ENCODE measurements at regions of chr12 and their contacts with region 1.

Region 1: DNA sequence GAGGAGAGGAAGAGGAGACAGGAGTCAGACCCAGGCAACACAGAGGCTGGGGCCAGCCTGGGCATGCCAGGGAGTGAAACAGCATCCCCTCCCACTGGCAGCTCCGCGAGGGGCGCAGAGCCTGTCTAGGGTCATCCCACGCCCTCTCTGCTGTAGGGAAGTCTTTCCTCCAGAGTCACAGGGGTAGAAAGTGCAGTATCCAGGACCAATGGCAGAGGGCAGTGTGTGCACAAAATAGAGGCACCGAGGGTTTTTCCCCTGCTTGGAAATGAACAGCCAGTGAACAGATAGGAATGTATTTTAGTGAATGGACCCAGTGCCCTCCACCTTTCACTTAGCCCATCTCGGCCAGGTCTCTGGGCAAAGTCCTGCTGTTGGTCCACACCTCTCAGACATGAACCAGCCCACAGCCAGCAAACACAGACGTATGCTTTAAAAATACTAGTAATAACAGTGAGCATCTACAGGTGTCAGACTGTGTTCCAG is 9.4 kb upstream of the KRT74 start:
- DNase-seq: peak; percentile 68
- H3K4me3 ChIP-seq: no peak overlapping the region
- H3K27ac ChIP-seq: no peak overlapping the region
- H3K4me1 ChIP-seq: no peaks in the 10 kb centered on the region
- H3K27me3 ChIP-seq: no peaks in the 10 kb centered on the region
- CTCF ChIP-seq: peak; percentile 33 to 66 (median 64)
- EP300 ChIP-seq: no peak
- POLR2A ChIP-seq: no peak

Region 2: DNA sequence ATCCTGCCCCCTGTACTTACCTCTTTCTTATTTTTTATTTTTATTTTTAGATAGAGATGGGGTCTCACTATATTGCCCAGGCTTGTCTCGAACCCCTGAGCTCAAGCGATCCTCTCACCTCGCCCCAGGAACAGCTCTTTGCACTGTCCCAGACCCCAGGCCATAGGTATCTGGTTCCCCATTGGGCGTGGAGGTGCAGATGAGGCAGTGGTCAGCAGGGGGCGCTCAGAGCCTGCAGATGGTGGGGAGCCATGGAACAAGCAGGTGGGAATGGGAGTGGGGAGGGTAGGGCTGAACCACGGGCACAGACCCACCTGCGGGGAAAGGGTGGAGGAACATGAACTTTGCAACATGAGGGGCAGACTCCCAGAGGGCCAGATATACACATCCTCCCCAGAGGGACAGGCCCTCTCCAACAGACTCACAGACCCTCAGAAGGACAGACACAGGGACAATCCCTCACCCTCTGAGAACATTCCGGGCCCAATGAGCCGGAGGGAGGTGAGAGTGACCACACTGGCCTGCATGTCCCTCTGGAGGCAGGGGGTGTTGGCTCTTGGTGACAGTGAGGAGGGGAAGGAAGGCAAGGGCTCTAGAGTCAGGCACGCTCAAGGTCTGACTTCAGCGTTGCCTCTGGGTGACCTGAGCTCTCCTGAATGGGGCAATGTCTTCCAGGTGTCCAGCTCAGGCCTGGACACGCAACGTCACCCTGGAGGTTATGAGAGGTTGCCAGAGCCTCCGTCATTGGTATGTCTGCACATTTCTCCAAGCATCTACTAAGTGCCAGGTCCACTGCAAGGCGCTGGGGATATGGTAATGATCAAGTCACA is 426.1 kb before region 1 on chr12:
- intact Hi-C with region 1: loop called (anchors 10 kb)
- DNase-seq: peak; percentile 84
- H3K4me3 ChIP-seq: no peak overlapping the region
- H3K27ac ChIP-seq: no peak overlapping the region
- H3K4me1 ChIP-seq: peaks cover 0 to 7% (median 7%) of the 10 kb centered on the region in 4 donors
- H3K27me3 ChIP-seq: no peaks in the 10 kb centered on the region
- CTCF ChIP-seq: peak; percentile 92 to 98 (median 94)
- EP300 ChIP-seq: no peak
- POLR2A ChIP-seq: no peak

Region 3: DNA sequence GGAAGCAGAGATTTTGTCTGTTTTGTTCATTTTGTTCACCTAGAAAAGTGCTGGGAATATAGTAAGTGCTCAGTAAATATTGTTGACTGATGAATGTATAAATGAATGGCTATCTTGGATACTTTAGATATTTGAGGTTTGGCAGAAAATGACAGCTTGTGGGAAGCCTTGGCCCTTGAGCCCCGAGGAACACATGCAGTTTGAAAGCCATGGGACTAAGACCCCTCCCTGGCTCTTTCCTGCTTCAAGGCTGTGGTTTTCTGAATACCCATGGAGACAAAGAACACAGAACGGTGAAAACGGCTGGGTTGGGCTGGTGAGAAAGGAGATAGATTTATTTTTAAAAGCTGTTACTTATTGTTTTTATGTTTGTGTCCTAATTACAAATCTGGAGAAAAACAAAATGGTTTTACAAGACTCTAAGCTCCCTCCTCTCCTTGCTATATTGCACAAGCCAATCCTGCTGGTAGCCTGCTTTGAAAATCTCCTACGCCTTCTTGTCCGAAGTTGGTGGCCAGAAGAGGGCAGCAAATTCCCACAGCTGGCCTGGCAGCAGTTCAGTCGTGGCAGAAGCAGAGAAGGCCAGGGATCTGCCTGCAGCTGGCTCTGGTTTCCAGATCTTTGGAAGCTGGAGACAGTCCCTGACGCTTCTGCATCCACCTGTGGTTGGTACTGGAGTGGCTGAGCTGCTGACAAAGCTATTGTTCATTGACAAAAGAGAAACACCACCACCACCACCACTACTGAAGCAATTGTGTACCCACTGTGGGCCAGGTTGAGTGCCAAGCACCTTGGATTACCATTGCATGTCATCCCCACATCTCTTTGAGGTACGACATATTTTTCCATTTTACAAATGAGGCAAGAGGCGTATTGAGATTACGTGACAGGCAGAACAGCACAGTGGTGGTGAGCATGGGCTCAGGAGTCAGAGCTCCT is 210.5 kb before region 1 on chr12:
- intact Hi-C with region 1: loop called (anchors 5 kb)
- DNase-seq: peak; percentile 89
- H3K4me3 ChIP-seq: no peak overlapping the region
- H3K27ac ChIP-seq: peak overlapping the region in 1 of 4 donors; percentile 34
- H3K4me1 ChIP-seq: peaks cover 0 to 15% (median 0%) of the 10 kb centered on the region in 4 donors
- H3K27me3 ChIP-seq: no peaks in the 10 kb centered on the region
- CTCF ChIP-seq: peak; percentile 65 to 80 (median 78)
- EP300 ChIP-seq: no peak
- POLR2A ChIP-seq: no peak

Region 4: DNA sequence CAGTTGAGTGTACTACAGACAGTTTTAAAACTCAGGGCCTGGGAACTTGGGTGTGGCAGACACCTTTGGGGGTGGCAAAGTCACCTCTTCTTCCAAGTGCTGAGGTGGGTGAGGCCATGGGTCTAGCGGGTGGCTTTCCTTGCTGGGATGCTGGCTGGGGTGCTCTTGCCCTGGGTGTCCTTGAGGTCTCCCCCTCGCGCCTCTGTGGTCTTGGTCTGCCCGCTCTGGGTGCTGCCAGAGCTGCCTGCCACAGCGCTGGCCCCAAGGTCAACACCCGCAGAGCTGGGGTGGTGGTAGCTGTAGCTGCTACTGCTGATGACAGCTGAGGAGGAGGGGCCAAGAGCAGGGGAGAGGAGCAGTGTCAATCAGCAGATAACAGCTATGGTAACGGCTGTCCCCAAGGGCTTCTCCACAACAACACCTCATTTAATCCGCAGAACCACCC is 16.1 kb before region 1 on chr12:
- intact Hi-C with region 1: no loop called
- DNase-seq: no peak
- H3K4me3 ChIP-seq: no peak overlapping the region
- H3K27ac ChIP-seq: no peak overlapping the region
- H3K4me1 ChIP-seq: no peaks in the 10 kb centered on the region
- H3K27me3 ChIP-seq: no peaks in the 10 kb centered on the region
- CTCF ChIP-seq: no peak
- EP300 ChIP-seq: no peak
- POLR2A ChIP-seq: no peak

Region 5: DNA sequence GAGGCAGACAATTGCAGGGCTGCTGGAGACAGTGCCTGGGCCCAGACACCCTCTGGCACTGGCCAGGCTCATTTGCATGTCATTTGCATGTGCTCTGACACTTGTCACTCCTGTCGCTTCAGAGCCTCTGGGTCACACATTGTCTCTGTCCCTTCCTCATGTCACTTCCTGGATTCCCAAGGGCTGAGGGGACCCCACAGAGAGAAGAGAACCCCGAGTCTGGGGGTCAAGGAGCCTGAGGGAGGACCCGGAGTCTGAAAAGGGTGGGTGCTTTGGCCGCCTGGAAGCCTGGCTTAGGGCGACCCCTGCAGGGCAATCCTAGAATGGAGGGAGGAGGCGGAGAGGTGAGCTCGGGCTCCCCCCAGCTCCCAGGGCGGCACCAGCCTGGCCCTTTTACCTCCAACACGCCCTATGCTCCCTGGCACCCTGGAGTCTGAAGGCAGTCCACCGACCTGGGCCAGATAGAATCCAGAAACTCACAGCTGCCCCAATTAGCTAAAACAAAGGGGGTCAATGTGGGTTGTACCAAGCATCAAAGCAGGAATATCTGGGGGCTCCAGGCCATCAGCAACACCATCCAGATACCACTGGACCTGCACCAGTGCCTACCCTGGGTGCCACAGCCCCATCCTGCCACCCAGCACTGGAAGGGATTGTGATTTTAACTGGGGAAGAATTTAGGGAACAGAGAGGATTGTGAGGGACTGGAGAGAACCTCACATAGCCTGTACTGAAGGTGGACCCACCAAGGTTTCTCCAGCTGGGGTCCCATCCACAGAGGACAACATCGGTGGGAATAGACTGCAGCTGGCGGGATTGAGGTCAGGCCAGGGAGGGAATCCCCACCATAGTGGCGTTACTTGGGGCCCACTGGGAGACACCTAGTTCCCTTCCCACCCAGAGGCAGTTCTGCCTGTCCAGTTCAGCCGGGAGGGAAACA is 287.6 kb after region 1 on chr12:
- intact Hi-C with region 1: loop called (anchors 2 kb)
- DNase-seq: peak; percentile 63
- H3K4me3 ChIP-seq: no peak overlapping the region
- H3K27ac ChIP-seq: peak overlapping the region in 2 of 4 donors; percentile 23 to 29
- H3K4me1 ChIP-seq: peaks cover 0 to 20% (median 14%) of the 10 kb centered on the region in 4 donors
- H3K27me3 ChIP-seq: no peaks in the 10 kb centered on the region
- CTCF ChIP-seq: peak in 3 of 4 experiments; percentile 45 to 63 (median 56)
- EP300 ChIP-seq: no peak
- POLR2A ChIP-seq: no peak

Region 6: DNA sequence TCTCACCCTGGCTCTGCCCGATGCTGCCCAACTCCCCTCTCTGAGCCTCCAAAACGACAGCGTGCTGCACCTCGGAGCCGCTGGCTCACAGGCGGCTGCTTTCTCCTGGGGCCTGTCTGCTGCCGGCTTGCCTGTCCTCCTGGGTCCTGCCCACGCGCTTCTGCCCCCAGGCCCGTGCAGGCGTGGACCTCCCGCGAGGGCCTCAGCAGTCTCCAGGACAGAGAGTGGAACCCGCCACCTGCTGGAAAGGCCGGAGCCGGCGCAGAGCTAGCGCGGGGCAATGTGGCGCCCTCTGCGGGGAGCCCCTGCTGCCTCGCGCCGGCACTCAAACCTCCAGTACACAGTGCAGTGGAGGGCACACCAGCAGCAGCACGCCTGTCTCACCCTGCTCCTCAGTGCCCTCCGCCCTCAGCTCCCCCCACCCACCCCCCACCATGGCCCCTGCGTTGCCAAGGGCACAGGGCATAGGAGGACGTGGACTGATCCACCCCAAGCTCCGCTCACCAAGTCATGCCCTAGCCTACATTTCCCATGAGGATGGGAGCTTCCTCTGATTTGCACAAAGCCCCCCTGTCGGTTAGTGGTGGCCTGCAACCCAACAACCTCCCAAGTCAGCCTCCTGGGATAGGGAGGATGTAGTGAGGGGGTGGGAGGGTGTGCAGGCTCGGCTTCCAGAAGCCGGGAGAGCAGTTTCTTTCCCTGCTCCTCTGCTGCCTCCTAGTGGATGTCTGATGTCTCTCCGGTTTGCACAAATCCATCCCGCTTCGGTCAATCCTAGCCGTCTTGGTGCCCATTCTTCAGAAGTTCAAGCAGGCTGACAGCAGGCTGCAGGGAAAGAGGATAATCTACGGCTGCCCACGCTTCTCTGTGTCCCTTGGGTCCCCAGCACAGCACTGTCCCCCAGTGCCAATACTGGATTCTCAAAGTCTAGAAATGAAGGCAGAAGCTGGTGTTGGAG is 296.7 kb after region 1 on chr12:
- intact Hi-C with region 1: loop called (anchors 2 kb)
- DNase-seq: peak; percentile 87
- H3K4me3 ChIP-seq: peak overlapping the region in 3 of 4 donors; percentile 7 to 35 (median 19)
- H3K27ac ChIP-seq: peak overlapping the region in 3 of 4 donors; percentile 15 to 61 (median 56)
- H3K4me1 ChIP-seq: peaks cover 0 to 25% (median 19%) of the 10 kb centered on the region in 4 donors
- H3K27me3 ChIP-seq: no peaks in the 10 kb centered on the region
- CTCF ChIP-seq: peak; percentile 72 to 82 (median 76)
- EP300 ChIP-seq: no peak
- POLR2A ChIP-seq: no peak

Region 7: DNA sequence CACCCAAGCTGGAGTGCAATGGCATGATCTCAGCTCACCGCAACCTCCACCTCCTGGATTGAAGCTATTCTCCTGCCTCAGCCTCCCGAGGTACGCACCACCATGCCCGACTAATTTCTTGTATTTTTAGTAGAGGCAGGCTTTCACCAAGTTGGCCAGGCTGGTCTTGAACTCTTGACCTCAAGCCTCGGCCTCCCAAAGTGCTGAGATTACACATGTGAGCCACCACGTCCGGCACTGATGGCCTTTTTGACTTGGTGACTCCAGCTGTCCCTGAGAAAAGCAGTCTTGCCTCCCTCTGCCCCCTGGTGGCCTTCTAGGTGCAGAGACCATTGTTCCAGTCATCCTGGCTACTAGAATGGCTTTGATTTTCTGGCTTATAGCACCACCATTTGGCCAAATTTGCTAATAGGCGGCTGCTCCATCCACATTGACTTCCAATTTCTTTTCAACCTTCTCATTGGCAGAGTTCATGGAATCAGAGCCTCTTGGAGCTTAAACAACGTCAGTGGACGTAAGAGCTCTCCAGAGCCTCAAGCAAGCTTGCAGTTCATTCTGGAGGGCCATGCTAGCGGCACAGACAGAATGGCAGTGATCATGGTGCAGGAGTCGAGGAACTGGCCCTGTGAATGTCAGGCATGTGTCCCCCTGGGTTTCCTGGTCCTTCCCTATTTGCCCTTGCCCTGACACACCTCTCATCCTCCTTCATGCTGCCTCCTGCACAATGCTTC is 397.8 kb after region 1 on chr12:
- intact Hi-C with region 1: loop called (anchors 10 kb)
- DNase-seq: peak; percentile 91
- H3K4me3 ChIP-seq: no peak overlapping the region
- H3K27ac ChIP-seq: no peak overlapping the region
- H3K4me1 ChIP-seq: no peaks in the 10 kb centered on the region
- H3K27me3 ChIP-seq: peaks cover 0 to 9% (median 0%) of the 10 kb centered on the region in 3 donors
- CTCF ChIP-seq: peak; percentile 92 to 99 (median 96)
- EP300 ChIP-seq: no peak
- POLR2A ChIP-seq: no peak

Measured in sigmoid colon (tissue), 7 donors.